RWPE1 (cell line): ENCODE measurements at regions of chr15 and their contacts with region 1.

Region 1: GRCh38 chr15:57751177-57751800 is 44.8 kb downstream of the POLR2M start:
- DNase-seq: peak; percentile 47
- H3K27ac ChIP-seq: no peak overlapping the region
- CTCF ChIP-seq: peak; percentile 65

Region 2: DNA sequence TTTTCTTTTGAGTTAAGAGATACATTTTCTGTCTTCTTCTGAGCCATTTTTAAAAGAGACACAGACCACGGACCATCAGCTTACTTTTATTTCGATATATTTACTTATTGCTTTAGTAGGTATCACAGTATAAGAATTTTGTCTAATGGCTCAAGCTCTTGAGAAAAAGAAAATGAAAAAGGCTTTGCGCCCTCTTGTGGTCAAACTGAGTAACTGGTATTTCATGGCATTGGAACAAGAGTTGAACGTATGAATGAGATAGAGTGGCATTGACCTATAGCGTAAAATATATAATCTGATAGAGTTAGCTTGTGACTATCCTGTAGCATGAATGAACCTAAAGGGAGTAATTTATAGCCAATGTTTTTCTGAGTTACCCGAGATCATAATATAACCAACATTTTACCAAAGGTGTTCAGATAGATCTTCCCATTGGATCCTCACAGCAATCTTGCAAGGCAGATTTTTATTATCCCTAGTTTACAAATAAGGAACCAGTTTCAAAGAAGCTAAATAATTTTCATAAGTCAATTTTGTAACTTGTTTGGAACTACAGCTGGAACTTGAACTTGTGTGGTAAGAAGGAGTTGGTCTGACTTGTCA is 109.8 kb after region 1 on chr15:
- CTCF ChIA-PET with region 1: interaction called, 27 read pairs
- POLR2A ChIA-PET with region 1: no interaction called
- DNase-seq: peak; percentile 38
- H3K27ac ChIP-seq: no peak overlapping the region
- CTCF ChIP-seq: peak; percentile 88